Right ventricle myocardium inferior (tissue), 1 donor: ENCODE measurements at regions of chr18 and their contacts with region 1.

Region 1: GRCh38 chr18:62249478-62250097 is 62.5 kb downstream of the RELCH start:
- DNase-seq: peak; percentile 51
- ATAC-seq: no peak

Region 2: DNA sequence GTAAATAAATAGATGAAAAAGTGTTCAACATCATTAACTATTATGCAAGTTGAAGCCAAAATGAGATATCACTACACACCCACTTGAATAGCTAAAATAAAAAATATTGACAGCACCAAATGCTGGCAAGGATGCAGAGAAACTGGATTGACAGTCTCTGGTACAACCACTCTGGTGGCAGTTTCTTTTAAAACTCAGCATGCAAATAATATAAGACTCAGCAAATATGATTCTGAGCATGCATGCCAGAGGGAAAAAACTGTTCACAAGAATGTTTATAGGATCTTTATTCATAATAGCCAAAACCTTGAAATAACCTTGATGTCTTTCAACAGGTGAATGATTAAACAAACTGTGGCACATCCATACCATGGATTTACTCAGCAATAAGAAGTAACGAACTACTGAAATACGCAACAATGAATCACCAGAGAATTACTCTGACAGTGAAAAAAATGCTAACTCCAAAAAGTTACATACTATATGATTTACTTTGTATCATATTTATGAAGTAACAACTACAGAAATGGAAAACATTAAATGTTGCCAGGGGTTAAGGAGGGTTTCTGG is 194.6 kb before region 1 on chr18:
- intact Hi-C with region 1: no loop called
- DNase-seq: no peak
- ATAC-seq: no peak

Region 3: DNA sequence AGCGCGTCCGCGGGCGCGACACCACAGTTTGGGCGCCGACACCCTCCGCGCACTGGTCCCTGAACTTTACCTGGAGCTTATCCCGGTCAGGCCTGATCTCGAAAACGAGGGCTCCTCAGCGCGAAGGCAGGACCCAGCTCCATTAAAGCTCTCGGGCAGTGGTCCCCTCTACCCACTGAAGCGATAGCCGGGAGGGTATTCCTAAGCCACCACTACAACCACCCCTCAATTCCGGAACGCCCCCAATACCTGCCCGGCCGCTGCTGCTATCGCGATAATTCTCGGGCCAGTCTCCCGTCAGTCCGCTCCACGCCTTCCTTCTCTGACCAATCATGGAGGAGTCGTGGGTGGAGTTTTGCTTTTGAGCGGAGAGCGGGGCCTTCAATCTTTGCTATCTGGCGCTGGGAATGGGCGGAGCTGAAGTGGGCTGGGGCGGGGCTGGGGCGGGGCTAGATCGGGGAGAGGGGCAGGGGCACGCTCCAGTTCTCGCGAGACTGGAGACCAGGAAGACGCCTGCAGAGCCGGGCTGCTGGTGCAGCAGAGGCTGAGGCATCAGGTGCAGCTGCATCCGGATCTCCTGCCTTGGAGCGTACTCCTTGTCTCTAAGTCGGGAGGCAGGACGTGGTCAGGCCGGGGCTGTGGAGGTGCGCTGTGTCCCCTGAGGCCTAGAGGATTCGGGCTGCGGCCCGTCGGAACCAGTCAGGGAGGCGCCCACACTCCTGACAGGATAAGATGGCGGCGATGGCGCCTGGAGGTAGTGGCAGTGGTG is 62.6 kb before region 1 on chr18 and contains the starts of genes PIGN and RELCH:
- intact Hi-C with region 1: loop called (anchors 1 kb)
- DNase-seq: peak; percentile 95
- ATAC-seq: peak; percentile 99
- total RNA-seq, gene PIGN: 21.0 TPM
- total RNA-seq, gene RELCH: 11.1 TPM

Region 4: GRCh38 chr18:62209046-62209445 is 40.5 kb before region 1 on chr18:
- intact Hi-C with region 1: no loop called
- DNase-seq: no peak
- ATAC-seq: no peak

Region 5: GRCh38 chr18:62526098-62527025 is 276.8 kb after region 1 on chr18:
- intact Hi-C with region 1: no loop called
- DNase-seq: peak; percentile 92
- ATAC-seq: peak; percentile 54